CD8-positive, alpha-beta T cell (primary cell): ENCODE measurements at regions of chr9 and their contacts with region 1.

Region 1: GRCh38 chr9:94213511-94214124 is 45.5 kb upstream of the ZNF169 start:
- DNase-seq: peak; percentile 35 to 87 (median 69)
- ATAC-seq: peak; percentile 75
- H3K4me3 ChIP-seq: no peak overlapping the region
- H3K4me3 Mint-ChIP-seq: no peak overlapping the region
- H3K27ac ChIP-seq: no peak overlapping the region
- H3K27ac Mint-ChIP-seq: no peak overlapping the region
- H3K4me1 ChIP-seq: peaks cover 3% of the 10 kb centered on the region
- H3K4me1 Mint-ChIP-seq: peaks cover 4% of the 10 kb centered on the region
- H3K27me3 ChIP-seq: no peaks in the 10 kb centered on the region
- H3K27me3 Mint-ChIP-seq: peaks cover 35% of the 10 kb centered on the region
- CTCF ChIP-seq: peak; percentile 86

Region 2: GRCh38 chr9:94014065-94014654 is 199.5 kb before region 1 on chr9:
- CTCF ChIA-PET with region 1: interaction called, 17 read pairs
- POLR2A ChIA-PET with region 1: no interaction called
- intact Hi-C with region 1: loop called (anchors 2 kb)
- DNase-seq: peak in 2 of 9 experiments; percentile 24 to 35
- ATAC-seq: no peak
- H3K4me3 ChIP-seq: no peak overlapping the region
- H3K4me3 Mint-ChIP-seq: no peak overlapping the region
- H3K27ac ChIP-seq: no peak overlapping the region
- H3K27ac Mint-ChIP-seq: no peak overlapping the region
- H3K4me1 ChIP-seq: peaks cover 18% of the 10 kb centered on the region
- H3K4me1 Mint-ChIP-seq: peaks cover 17% of the 10 kb centered on the region
- H3K27me3 ChIP-seq: no peaks in the 10 kb centered on the region
- H3K27me3 Mint-ChIP-seq: no peaks in the 10 kb centered on the region
- CTCF ChIP-seq: peak; percentile 51

Region 3: GRCh38 chr9:94065535-94065961 is 148.1 kb before region 1 on chr9:
- CTCF ChIA-PET with region 1: interaction called, 311 read pairs
- POLR2A ChIA-PET with region 1: interaction called, 7 read pairs
- intact Hi-C with region 1: loop called (anchors 1 kb)
- DNase-seq: peak; percentile 44 to 82 (median 76)
- ATAC-seq: peak; percentile 64
- H3K4me3 ChIP-seq: no peak overlapping the region
- H3K4me3 Mint-ChIP-seq: no peak overlapping the region
- H3K27ac ChIP-seq: no peak overlapping the region
- H3K27ac Mint-ChIP-seq: no peak overlapping the region
- H3K4me1 ChIP-seq: no peaks in the 10 kb centered on the region
- H3K4me1 Mint-ChIP-seq: peaks cover 2% of the 10 kb centered on the region
- H3K27me3 ChIP-seq: no peaks in the 10 kb centered on the region
- H3K27me3 Mint-ChIP-seq: no peaks in the 10 kb centered on the region
- CTCF ChIP-seq: peak; percentile 85

Region 4: GRCh38 chr9:94139672-94140417 is 73.8 kb before region 1 on chr9:
- CTCF ChIA-PET with region 1: interaction called, 3 read pairs
- POLR2A ChIA-PET with region 1: no interaction called
- intact Hi-C with region 1: loop called in 1 of 2 experiments (anchors 5 kb)
- DNase-seq: no peak
- ATAC-seq: no peak
- H3K4me3 ChIP-seq: no peak overlapping the region
- H3K4me3 Mint-ChIP-seq: no peak overlapping the region
- H3K27ac ChIP-seq: no peak overlapping the region
- H3K27ac Mint-ChIP-seq: no peak overlapping the region
- H3K4me1 ChIP-seq: no peaks in the 10 kb centered on the region
- H3K4me1 Mint-ChIP-seq: peaks cover 4% of the 10 kb centered on the region
- H3K27me3 ChIP-seq: no peaks in the 10 kb centered on the region
- H3K27me3 Mint-ChIP-seq: no peaks in the 10 kb centered on the region
- CTCF ChIP-seq: no peak